ENCODE measurements at regions of chr1 and their contacts with region 1.

Region 1: DNA sequence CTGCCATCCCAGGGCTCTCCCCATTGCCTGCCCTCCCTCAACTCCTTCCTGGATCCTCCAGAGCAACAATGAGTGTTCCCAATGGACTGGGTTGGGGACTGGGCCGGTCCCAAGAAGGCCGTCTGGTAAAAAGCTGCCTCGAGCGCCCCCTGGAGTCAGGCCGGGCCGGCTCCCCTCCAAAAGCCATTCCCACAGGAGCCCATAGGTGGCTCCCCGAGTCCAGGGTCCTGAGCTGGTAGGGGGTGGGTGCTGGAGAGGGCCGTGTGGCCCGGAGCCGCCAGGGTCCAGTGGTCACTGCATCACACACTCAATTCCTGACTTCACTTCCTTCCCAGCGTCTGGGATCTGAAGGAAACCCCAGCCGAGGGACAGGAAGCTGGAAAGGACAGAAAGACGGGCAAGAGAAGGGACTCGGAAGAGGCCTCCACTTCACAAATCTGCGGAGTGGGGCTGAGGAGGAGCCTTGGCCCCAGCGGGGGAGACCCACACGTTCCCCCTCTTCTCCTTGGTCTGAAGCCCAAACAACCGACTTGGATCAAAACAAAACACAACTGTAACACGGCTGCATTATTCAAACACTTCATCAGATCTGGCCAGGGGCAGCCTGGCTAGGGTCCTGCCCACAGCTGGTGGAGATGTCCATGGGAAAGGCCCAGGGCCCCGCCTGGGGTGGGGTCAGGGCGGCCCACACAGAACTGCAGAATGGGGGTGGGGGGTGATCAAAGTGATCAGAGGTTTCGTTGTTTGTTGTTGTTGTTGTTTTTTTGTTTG is 10.9 kb upstream of the ALDH4A1 start:
- DNase-seq: peak; percentile 64
- H3K4me3 Mint-ChIP-seq: no peak overlapping the region
- H3K27ac Mint-ChIP-seq: no peak overlapping the region
- H3K4me1 Mint-ChIP-seq: peaks cover 5% of the 10 kb centered on the region
- H3K27me3 Mint-ChIP-seq: no peaks in the 10 kb centered on the region

Region 2: DNA sequence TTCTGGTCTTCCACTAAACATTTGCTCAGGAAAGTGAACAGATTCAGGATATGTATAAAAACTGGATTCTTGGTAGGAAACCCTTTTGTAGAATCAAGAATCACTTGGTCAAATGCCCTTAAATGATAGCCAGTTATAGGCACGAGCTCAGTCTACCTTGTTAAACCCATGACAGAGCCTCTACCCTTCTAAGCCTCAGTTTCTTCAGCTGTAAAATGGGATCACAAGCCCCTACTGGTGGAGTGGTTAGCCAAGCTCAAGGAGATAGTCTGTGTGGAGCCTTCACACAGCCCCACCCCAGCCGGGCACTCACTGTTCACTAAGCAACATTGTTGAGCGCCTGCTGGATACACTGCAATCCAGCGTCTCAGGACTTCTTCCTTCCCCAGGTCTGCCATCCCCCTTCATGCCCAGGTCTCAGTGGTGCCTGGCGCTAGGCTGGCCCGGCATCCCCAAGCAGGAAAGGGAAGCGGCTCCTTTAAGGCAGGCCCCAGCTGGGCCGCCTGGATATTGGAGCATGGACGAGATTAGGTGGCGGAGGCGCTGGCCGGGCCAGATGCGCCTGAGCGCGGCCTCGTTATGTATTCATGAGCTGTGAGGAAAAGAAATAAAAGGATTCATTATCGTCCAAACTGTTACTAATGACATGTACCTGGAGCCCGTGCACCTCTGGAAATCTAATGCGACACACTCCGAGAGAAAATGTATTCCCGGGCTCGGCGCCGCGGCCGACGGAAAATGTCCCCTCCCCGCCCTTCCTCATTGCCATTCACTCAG is 129.4 kb before region 1 on chr1:
- CTCF ChIA-PET with region 1: no interaction called
- POLR2A ChIA-PET with region 1: no interaction called
- DNase-seq: no peak
- H3K4me3 Mint-ChIP-seq: no peak overlapping the region
- H3K27ac Mint-ChIP-seq: no peak overlapping the region
- H3K4me1 Mint-ChIP-seq: no peaks in the 10 kb centered on the region
- H3K27me3 Mint-ChIP-seq: peaks cover 33% of the 10 kb centered on the region

Region 3: GRCh38 chr1:18956369-18957135 is 43.3 kb after region 1 on chr1 and contains the start of gene IFFO2:
- CTCF ChIA-PET with region 1: interaction called, 15 read pairs
- POLR2A ChIA-PET with region 1: no interaction called
- DNase-seq: peak; percentile 97
- H3K4me3 Mint-ChIP-seq: peak within 1 kb of the TSS; percentile 80
- H3K27ac Mint-ChIP-seq: peak within 1 kb of the TSS; percentile 79
- H3K4me1 Mint-ChIP-seq: peaks cover 65% of the 10 kb centered on the region
- H3K27me3 Mint-ChIP-seq: peaks cover 18% of the 10 kb centered on the region
- total RNA-seq, gene IFFO2: 20.4 to 21.7 TPM

Region 4: GRCh38 chr1:19074902-19075721 is 161.9 kb after region 1 on chr1:
- CTCF ChIA-PET with region 1: interaction called, 18 read pairs
- POLR2A ChIA-PET with region 1: no interaction called
- DNase-seq: no peak
- H3K4me3 Mint-ChIP-seq: peak overlapping the region; percentile 28
- H3K27ac Mint-ChIP-seq: peak overlapping the region; percentile 77
- H3K4me1 Mint-ChIP-seq: peaks cover 46% of the 10 kb centered on the region
- H3K27me3 Mint-ChIP-seq: no peaks in the 10 kb centered on the region

Measured in activated CD4-positive, alpha-beta T cell treated with anti-CD3 and anti-CD28 coated beads, Interleukin-2, amount 10 ng/mL, durations not matched to agents 7 days and 5 days (primary cell).